ENCODE measurements at regions of chr10 and their contacts with region 1.

Region 1: GRCh38 chr10:31318854-31319601 is at the start of gene ZEB1:
- DNase-seq: peak; percentile 64 to 96 (median 91)
- ATAC-seq: peak; percentile 79
- H3K4me3 ChIP-seq: peak within 1 kb of the TSS; percentile 89
- H3K4me3 Mint-ChIP-seq: peak within 1 kb of the TSS; percentile 91 to 100 (median 99)
- H3K27ac ChIP-seq: peak within 1 kb of the TSS; percentile 99
- H3K27ac Mint-ChIP-seq: peak within 1 kb of the TSS; percentile 96 to 100 (median 99)
- H3K4me1 ChIP-seq: peaks cover 11 to 27% of the 10 kb centered on the region in 2 donors
- H3K4me1 Mint-ChIP-seq: peaks cover 14 to 48% (median 41%) of the 10 kb centered on the region in 7 donors
- H3K27me3 ChIP-seq: no peaks in the 10 kb centered on the region
- H3K27me3 Mint-ChIP-seq: peaks cover 0 to 2% (median 0%) of the 10 kb centered on the region in 5 donors
- total RNA-seq, gene ZEB1: 65.5 to 126 (median 80.9) TPM

Region 2: DNA sequence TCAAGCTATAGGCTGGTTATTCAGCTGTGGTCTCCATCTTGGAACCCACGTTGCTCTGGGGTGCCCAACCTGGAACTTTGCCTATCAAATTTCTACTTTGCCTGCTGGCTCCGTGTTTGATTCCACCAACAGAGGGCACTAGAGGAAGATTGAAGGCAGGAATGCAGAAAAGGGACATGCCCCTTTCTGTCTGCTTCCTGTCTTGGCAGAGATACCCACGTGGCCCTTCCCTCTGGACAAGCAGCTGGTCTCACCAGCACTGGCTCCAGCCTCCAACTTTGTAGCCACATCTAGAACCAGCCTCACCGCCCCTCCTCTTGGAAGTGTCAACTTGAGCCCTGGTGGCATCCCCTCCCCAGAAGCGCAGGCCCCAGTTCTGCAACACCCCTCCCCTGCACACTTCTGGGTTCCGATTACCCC is 235.3 kb before region 1 on chr10:
- CTCF ChIA-PET with region 1: no interaction called
- POLR2A ChIA-PET with region 1: no interaction called
- intact Hi-C with region 1: loop called (anchors 1 to 2 kb)
- DNase-seq: peak; percentile 14 to 67 (median 56)
- ATAC-seq: peak; percentile 66
- H3K4me3 ChIP-seq: no peak overlapping the region
- H3K4me3 Mint-ChIP-seq: no peak overlapping the region
- H3K27ac ChIP-seq: no peak overlapping the region
- H3K27ac Mint-ChIP-seq: no peak overlapping the region
- H3K4me1 ChIP-seq: no peaks in the 10 kb centered on the region
- H3K4me1 Mint-ChIP-seq: peaks cover 0 to 12% (median 3%) of the 10 kb centered on the region in 7 donors
- H3K27me3 ChIP-seq: no peaks in the 10 kb centered on the region
- H3K27me3 Mint-ChIP-seq: peaks cover 0 to 5% (median 0%) of the 10 kb centered on the region in 5 donors

Region 3: GRCh38 chr10:31353574-31353973 is 34.5 kb after region 1 on chr10:
- CTCF ChIA-PET with region 1: no interaction called
- POLR2A ChIA-PET with region 1: no interaction called
- intact Hi-C with region 1: loop called (anchors 1 to 2 kb)
- DNase-seq: peak in 2 of 9 donors; percentile 21 to 41
- ATAC-seq: peak; percentile 73
- H3K4me3 ChIP-seq: no peak overlapping the region
- H3K4me3 Mint-ChIP-seq: peak overlapping the region in 1 of 10 donors; percentile 8
- H3K27ac ChIP-seq: no peak overlapping the region
- H3K27ac Mint-ChIP-seq: no peak overlapping the region
- H3K4me1 ChIP-seq: peaks cover 4 to 12% of the 10 kb centered on the region in 2 donors
- H3K4me1 Mint-ChIP-seq: peaks cover 35 to 88% (median 76%) of the 10 kb centered on the region in 7 donors
- H3K27me3 ChIP-seq: no peaks in the 10 kb centered on the region
- H3K27me3 Mint-ChIP-seq: no peaks in the 10 kb centered on the region

Region 4: DNA sequence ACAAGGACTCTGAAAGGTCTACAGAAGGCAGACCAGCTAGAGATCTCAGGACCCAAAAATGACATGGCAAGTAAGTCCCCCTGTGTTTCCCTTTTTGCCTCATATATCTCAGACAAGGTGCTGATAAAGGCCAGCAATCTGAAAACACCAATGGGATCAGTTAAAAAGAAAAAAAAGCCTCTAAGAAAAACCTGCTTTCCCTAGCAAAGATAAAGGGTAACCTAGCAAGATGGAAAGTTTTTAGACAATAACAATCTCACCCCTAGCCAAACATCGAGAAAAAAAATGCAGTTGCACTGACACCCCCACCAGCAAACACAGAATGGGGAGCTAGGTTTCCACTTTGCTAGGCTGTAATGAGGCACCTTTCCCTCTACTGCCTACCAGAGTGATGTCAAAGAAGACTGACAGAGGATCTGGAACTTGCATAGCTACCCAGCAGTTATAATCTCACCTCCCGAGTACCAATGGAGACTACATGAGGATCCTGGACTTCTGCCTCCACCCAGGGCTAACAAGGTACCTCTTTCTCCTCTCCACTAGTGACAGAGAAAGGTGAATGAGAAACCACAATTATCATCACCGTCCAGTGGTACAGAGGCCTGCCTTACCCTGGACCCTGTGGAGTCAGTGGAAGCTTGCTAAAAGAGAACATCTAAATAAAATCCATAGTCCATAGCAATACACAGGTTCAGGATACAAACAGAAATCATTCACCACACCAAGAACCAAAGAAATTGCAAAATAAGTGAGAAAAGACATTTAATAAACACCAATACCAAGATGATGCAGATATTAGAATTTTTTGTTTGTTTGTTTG is 368.8 kb after region 1 on chr10:
- CTCF ChIA-PET with region 1: no interaction called
- POLR2A ChIA-PET with region 1: no interaction called
- intact Hi-C with region 1: loop called in 1 of 2 experiments (anchors 2 kb)
- DNase-seq: peak in 7 of 9 donors; percentile 19 to 59 (median 46)
- ATAC-seq: peak; percentile 40
- H3K4me3 ChIP-seq: no peak overlapping the region
- H3K4me3 Mint-ChIP-seq: no peak overlapping the region
- H3K27ac ChIP-seq: no peak overlapping the region
- H3K27ac Mint-ChIP-seq: peak overlapping the region in 1 of 9 donors; percentile 34
- H3K4me1 ChIP-seq: no peaks in the 10 kb centered on the region
- H3K4me1 Mint-ChIP-seq: no peaks in the 10 kb centered on the region
- H3K27me3 ChIP-seq: no peaks in the 10 kb centered on the region
- H3K27me3 Mint-ChIP-seq: peaks cover 0 to 5% (median 0%) of the 10 kb centered on the region in 5 donors

Region 5: GRCh38 chr10:32459051-32459698 is 1140.1 kb after region 1 on chr10:
- CTCF ChIA-PET with region 1: no interaction called
- POLR2A ChIA-PET with region 1: no interaction called
- intact Hi-C with region 1: loop called in 1 of 2 experiments (anchors 5 kb)
- DNase-seq: peak in 7 of 9 donors; percentile 76 to 90 (median 87)
- ATAC-seq: peak; percentile 100
- H3K4me3 ChIP-seq: peak overlapping the region; percentile 34
- H3K4me3 Mint-ChIP-seq: peak overlapping the region; percentile 48 to 79 (median 68)
- H3K27ac ChIP-seq: peak overlapping the region; percentile 43
- H3K27ac Mint-ChIP-seq: peak overlapping the region; percentile 73 to 92 (median 85)
- H3K4me1 ChIP-seq: peaks cover 31 to 35% of the 10 kb centered on the region in 2 donors
- H3K4me1 Mint-ChIP-seq: peaks cover 20 to 69% (median 61%) of the 10 kb centered on the region in 7 donors
- H3K27me3 ChIP-seq: no peaks in the 10 kb centered on the region
- H3K27me3 Mint-ChIP-seq: no peaks in the 10 kb centered on the region